A549 (cell line): ENCODE measurements at regions of chr20 and their contacts with region 1.

Region 1: GRCh38 chr20:5788385-5788895 is 38.2 kb downstream of the SHLD1 start:
- DNase-seq: peak; percentile 80 to 94
- ATAC-seq: peak; percentile 91 to 92
- H3K4me3 ChIP-seq: no peak overlapping the region
- H3K27ac ChIP-seq: peak overlapping the region; percentile 69 to 74
- H3K4me1 ChIP-seq: peaks cover 37% of the 10 kb centered on the region
- CTCF ChIP-seq: peak; percentile 99
- EP300 ChIP-seq: no peak
- POLR2A ChIP-seq: no peak
- RAD21 ChIP-seq: peak; percentile 100

Region 2: GRCh38 chr20:4864311-4864752 is 924.1 kb before region 1 on chr20:
- CTCF ChIA-PET with region 1: no interaction called
- POLR2A ChIA-PET with region 1: no interaction called
- DNase-seq: peak in 1 of 2 experiments; percentile 35
- ATAC-seq: peak; percentile 36 to 43; a peak in 3 of 6 replicates
- H3K4me3 ChIP-seq: no peak overlapping the region
- H3K27ac ChIP-seq: no peak overlapping the region
- H3K4me1 ChIP-seq: peaks cover 14% of the 10 kb centered on the region
- CTCF ChIP-seq: no peak
- EP300 ChIP-seq: no peak
- POLR2A ChIP-seq: no peak
- RAD21 ChIP-seq: no peak

Region 3: GRCh38 chr20:5543385-5543784 is 245.1 kb before region 1 on chr20:
- CTCF ChIA-PET with region 1: interaction called, 16 read pairs
- POLR2A ChIA-PET with region 1: no interaction called
- DNase-seq: no peak
- ATAC-seq: no peak
- H3K4me3 ChIP-seq: no peak overlapping the region
- H3K27ac ChIP-seq: no peak overlapping the region
- H3K4me1 ChIP-seq: no peaks in the 10 kb centered on the region
- CTCF ChIP-seq: no peak
- EP300 ChIP-seq: no peak
- POLR2A ChIP-seq: no peak
- RAD21 ChIP-seq: no peak

Region 4: GRCh38 chr20:5580936-5581708 is 207.3 kb before region 1 on chr20:
- CTCF ChIA-PET with region 1: interaction called, 13 read pairs
- POLR2A ChIA-PET with region 1: no interaction called
- DNase-seq: no peak
- ATAC-seq: peak in 1 of 2 experiments; percentile 12; a peak in 1 of 6 replicates
- H3K4me3 ChIP-seq: no peak overlapping the region
- H3K27ac ChIP-seq: no peak overlapping the region
- H3K4me1 ChIP-seq: peaks cover 7% of the 10 kb centered on the region; the same call in 2 of the 3 replicates
- CTCF ChIP-seq: no peak
- EP300 ChIP-seq: no peak
- POLR2A ChIP-seq: no peak
- RAD21 ChIP-seq: no peak

Region 5: DNA sequence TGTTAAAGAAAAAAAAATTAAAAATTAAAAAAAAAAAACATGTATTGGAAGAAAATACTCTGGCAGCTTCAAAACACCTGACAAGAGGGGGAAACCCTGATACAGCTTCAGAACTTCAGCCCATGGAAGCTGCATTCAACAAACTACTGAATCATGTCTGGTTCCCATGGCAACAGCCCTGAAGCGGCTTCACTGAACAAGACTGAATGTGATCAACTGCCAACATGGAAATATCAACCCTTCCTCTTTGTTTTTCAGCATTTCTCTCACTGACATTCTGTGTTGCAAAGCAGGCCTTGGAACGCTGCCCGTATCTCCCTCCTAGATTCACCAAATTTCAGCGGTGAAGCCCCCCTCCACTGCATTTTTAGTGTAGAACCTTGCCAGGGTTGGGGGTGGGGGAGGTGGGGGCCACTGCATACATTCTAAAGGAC is 129.5 kb before region 1 on chr20:
- CTCF ChIA-PET with region 1: interaction called, 44 read pairs
- POLR2A ChIA-PET with region 1: interaction called, 3 read pairs
- DNase-seq: peak; percentile 68 to 90
- ATAC-seq: peak; percentile 11 to 15; a peak in 2 of 6 replicates
- H3K4me3 ChIP-seq: no peak overlapping the region
- H3K27ac ChIP-seq: peak overlapping the region; percentile 91 to 96
- H3K4me1 ChIP-seq: peaks cover 70% of the 10 kb centered on the region
- CTCF ChIP-seq: no peak
- EP300 ChIP-seq: no peak
- POLR2A ChIP-seq: no peak
- RAD21 ChIP-seq: no peak

Region 6: GRCh38 chr20:5741089-5741488 is 47.4 kb before region 1 on chr20:
- CTCF ChIA-PET with region 1: interaction called, 16 read pairs
- POLR2A ChIA-PET with region 1: no interaction called
- DNase-seq: peak in 1 of 2 experiments; percentile 37
- ATAC-seq: no peak
- H3K4me3 ChIP-seq: no peak overlapping the region
- H3K27ac ChIP-seq: peak overlapping the region; percentile 77 to 93; a peak in 5 of 6 replicates
- H3K4me1 ChIP-seq: peaks cover 42% of the 10 kb centered on the region
- CTCF ChIP-seq: no peak
- EP300 ChIP-seq: no peak
- POLR2A ChIP-seq: no peak
- RAD21 ChIP-seq: no peak

Region 7: DNA sequence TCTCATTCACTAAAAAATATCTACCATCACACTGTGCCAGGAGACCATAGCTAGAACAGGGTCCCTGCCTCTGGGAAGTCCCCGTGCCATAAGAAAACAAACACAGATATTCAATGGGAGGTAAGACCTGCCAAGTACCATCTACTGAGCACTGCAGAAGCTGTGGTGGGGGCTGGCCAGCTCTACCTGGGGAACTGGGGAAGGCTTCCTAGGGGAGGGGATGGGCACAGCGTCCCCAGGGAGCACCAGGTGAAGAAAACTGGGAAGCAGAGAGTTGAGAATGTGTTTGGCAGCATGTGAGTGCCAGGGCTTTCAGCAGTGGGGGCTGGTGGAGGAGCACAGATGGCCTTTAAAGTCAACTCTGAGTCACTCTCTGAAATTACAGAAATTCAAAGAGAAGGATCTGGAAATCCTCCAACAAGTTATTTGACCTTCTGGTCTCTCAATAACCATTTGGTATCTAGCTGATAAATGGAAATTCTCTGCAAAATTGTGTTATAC is 46.9 kb after region 1 on chr20:
- CTCF ChIA-PET with region 1: interaction called, 14 read pairs
- POLR2A ChIA-PET with region 1: no interaction called
- DNase-seq: peak; percentile 38 to 54
- ATAC-seq: peak; percentile 86
- H3K4me3 ChIP-seq: no peak overlapping the region
- H3K27ac ChIP-seq: peak overlapping the region; percentile 30 to 60; a peak in 5 of 6 replicates
- H3K4me1 ChIP-seq: peaks cover 23% of the 10 kb centered on the region
- CTCF ChIP-seq: no peak
- EP300 ChIP-seq: peak in 1 of 2 experiments; percentile 50; a peak in 1 of 5 replicates
- POLR2A ChIP-seq: no peak
- RAD21 ChIP-seq: no peak; a peak in 1 of 5 replicates